ENCODE measurements at regions of chr11 and their contacts with region 1.

Region 1: GRCh38 chr11:124673333-124674167 is at the starts of genes SIAE and SPA17:
- DNase-seq: peak; percentile 91
- ATAC-seq: peak; percentile 89
- H3K4me3 Mint-ChIP-seq: peak within 1 kb of the TSS; percentile 88
- H3K27ac Mint-ChIP-seq: peak within 1 kb of the TSS; percentile 90
- H3K4me1 Mint-ChIP-seq: peaks cover 30% of the 10 kb centered on the region
- H3K27me3 Mint-ChIP-seq: no peaks in the 10 kb centered on the region
- CTCF ChIP-seq: no peak
- total RNA-seq, gene SIAE: 5.0 to 6.2 TPM
- total RNA-seq, gene SPA17: 3.1 to 3.6 TPM

Region 2: DNA sequence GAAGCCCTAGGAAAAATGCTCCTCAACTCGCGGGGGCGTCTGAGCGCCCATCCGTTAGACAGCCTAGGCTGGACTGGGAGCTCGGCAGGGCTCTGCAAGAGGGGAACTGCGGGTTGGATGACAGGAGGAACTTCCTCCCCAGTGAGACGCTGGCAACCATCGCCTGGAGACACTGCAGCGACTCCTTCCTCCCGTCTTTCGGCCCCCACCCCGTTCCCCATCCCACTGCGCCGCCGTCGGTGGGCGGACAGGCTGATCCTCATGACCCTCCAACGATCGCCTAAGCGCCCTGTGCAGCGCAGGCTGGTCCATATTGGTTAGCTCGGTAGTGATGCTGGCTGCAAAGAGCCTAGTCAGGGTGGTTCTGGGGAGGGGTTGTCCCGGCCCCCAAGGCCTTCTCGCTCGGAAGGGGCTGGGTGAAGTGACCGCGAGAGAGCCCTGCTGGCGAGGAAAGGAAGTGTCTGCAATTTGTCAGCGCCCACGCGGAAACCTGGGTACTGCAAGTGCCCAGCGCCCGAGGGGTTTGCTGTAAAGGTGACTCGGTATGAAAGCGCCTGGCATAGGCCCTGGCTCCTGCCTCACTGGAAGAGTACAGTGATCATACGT is 66.8 kb after region 1 on chr11:
- CTCF ChIA-PET with region 1: interaction called, 14 read pairs
- POLR2A ChIA-PET with region 1: interaction called, 3 read pairs
- intact Hi-C with region 1: loop called (anchors 5 kb)
- DNase-seq: peak; percentile 82
- ATAC-seq: peak; percentile 68
- H3K4me3 Mint-ChIP-seq: peak overlapping the region; percentile 79
- H3K27ac Mint-ChIP-seq: no peak overlapping the region
- H3K4me1 Mint-ChIP-seq: peaks cover 16% of the 10 kb centered on the region
- H3K27me3 Mint-ChIP-seq: peaks cover 15% of the 10 kb centered on the region
- CTCF ChIP-seq: peak; percentile 65

Region 3: DNA sequence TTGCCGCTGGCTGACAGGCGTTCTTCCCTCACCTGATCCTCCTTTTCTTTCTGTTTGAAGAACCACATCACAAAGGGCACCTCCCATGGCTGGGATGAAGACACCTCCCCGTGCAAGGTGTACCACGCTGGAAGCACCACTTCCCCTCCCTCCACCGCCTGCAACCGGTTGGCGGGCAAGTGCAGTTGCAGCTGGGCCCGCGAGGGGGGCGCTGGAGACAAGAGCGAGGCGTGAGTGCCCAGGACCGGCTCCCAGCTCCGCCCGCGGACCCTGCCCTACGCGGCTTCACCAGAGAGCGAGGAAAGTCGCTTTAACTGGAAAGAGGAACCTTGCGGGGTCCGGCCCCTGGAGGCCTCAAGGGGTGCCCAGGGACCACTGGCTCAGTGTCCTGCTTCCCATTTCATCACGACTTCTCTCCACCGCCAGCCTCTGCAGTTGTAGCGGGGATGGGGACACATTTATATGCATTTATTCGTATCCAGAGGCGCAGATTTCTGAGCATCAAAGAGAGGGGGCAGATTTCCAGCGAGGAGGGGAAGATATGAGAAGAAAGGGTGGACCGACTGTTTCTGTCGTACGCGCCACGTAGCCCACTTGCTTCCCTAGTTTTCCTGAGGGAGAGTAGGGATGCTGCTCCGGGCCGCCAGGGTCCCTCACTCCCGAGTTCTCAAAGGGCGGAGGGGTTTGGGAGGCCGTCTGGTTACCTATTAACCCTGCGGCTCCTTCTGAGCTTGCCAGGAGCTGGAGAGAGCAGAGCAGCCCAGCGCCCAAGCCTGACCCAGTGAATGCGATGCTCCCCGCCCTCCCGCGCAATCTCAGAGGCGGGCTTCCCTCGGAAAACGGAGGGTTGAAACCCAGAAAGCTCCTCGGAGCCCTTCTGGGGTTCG is 85.0 kb after region 1 on chr11:
- CTCF ChIA-PET with region 1: interaction called, 92 read pairs
- POLR2A ChIA-PET with region 1: interaction called, 4 read pairs
- intact Hi-C with region 1: loop called (anchors 1 kb)
- DNase-seq: peak; percentile 78
- ATAC-seq: peak; percentile 81
- H3K4me3 Mint-ChIP-seq: peak overlapping the region; percentile 62
- H3K27ac Mint-ChIP-seq: no peak overlapping the region
- H3K4me1 Mint-ChIP-seq: peaks cover 24% of the 10 kb centered on the region
- H3K27me3 Mint-ChIP-seq: peaks cover 43% of the 10 kb centered on the region
- CTCF ChIP-seq: peak; percentile 85

Region 4: GRCh38 chr11:124793466-124794278 is 120.1 kb after region 1 on chr11:
- CTCF ChIA-PET with region 1: interaction called, 43 read pairs
- POLR2A ChIA-PET with region 1: interaction called, 3 read pairs
- intact Hi-C with region 1: no loop called
- DNase-seq: peak; percentile 47
- ATAC-seq: peak; percentile 71
- H3K4me3 Mint-ChIP-seq: no peak overlapping the region
- H3K27ac Mint-ChIP-seq: no peak overlapping the region
- H3K4me1 Mint-ChIP-seq: peaks cover 48% of the 10 kb centered on the region
- H3K27me3 Mint-ChIP-seq: no peaks in the 10 kb centered on the region
- CTCF ChIP-seq: peak; percentile 76

Region 5: DNA sequence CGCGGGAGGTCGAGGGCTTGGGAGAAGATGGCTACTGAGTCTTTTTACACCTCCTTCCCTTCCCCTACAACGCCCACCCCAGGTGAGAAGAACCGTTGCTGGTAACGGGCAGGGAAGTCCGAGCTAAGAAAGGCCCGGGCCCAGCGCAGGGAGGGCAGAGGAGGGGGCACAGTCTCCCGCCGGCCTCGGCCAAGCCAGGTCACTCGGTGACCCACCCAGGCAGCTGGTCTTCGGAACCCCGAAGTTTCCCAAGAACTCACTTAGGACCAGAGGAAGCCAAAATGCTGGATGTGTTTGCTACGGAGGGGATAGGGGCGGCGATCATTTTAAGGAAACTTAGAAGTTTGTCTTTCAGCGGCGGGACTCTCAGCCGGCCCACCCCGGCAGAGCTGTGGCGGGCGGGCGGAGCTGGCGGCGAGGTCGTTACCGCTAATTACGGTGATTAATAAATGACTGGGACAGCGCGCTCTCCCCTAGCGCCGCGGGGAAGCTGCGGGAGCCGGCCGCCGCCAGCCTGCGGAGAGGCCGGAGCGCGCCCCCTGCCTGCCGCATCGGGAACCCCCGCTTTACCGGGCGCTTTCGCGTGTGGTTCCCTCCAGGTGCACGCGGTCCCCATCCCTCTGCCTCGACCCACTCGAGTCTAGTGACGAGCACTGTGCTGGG is 192.5 kb after region 1 on chr11:
- CTCF ChIA-PET with region 1: interaction called, 20 read pairs
- POLR2A ChIA-PET with region 1: interaction called, 3 read pairs
- intact Hi-C with region 1: no loop called
- DNase-seq: peak; percentile 64
- ATAC-seq: peak; percentile 65
- H3K4me3 Mint-ChIP-seq: no peak overlapping the region
- H3K27ac Mint-ChIP-seq: no peak overlapping the region
- H3K4me1 Mint-ChIP-seq: peaks cover 36% of the 10 kb centered on the region
- H3K27me3 Mint-ChIP-seq: peaks cover 88% of the 10 kb centered on the region
- CTCF ChIP-seq: peak; percentile 75